A549 (cell line): ENCODE measurements at regions of chr17 and their contacts with region 1.

Region 1: DNA sequence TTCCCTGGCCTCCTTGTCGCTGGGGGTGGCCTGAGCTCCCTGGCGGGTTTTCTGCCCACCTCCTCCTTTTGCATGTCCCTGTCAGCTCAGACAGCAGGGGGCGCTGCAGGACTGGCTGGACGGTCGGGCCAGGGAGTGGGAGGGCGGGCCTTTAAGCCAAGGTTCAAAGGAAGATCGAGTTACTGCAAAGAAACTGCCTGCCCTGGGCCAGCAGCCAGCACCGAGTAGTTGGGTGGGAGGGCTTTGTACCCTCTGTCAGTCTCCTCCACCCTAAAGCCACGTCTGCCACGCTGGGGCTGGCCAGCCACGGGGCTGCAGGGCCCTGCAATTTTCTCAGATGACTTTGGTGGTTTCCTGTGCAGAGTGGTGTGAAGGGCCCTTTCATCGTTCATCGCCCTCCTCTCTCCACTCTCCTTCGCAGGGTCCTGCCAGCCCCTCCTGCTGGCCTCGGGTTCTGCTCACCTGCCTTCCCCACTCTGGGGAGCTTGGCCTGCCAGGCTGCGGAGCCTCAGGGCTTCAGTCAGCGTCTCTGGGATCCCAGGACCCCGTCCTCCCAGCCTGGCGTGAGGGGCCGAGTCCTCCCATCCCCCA is 12.3 kb downstream of the GPR142 start:
- DNase-seq: peak; percentile 85 to 94
- ATAC-seq: peak; percentile 84 to 96
- H3K4me3 ChIP-seq: 0 out of 3 replicates have a peak overlapping the region, but pooled peaks have one; percentile 4
- H3K27ac ChIP-seq: peak overlapping the region; percentile 36 to 80; a peak in 5 of 6 replicates
- H3K4me1 ChIP-seq: peaks cover 14% of the 10 kb centered on the region
- CTCF ChIP-seq: peak; percentile 99
- EP300 ChIP-seq: no peak
- POLR2A ChIP-seq: no peak
- RAD21 ChIP-seq: peak; percentile 100

Region 2: GRCh38 chr17:74296548-74296936 is 83.0 kb before region 1 on chr17:
- CTCF ChIA-PET with region 1: interaction called, 18 read pairs
- POLR2A ChIA-PET with region 1: no interaction called
- DNase-seq: peak; percentile 60 to 73
- ATAC-seq: peak; percentile 87
- H3K4me3 ChIP-seq: no peak overlapping the region
- H3K27ac ChIP-seq: no peak overlapping the region
- H3K4me1 ChIP-seq: peaks cover 7% of the 10 kb centered on the region; the same call in 2 of the 3 replicates
- CTCF ChIP-seq: peak; percentile 53
- EP300 ChIP-seq: no peak
- POLR2A ChIP-seq: no peak
- RAD21 ChIP-seq: peak; percentile 31 to 48; a peak in 3 of 5 replicates

Region 3: GRCh38 chr17:74394977-74395376 is 15.4 kb after region 1 on chr17:
- CTCF ChIA-PET with region 1: interaction called, 84 read pairs
- POLR2A ChIA-PET with region 1: no interaction called
- DNase-seq: peak in 1 of 2 experiments; percentile 27
- ATAC-seq: peak; percentile 41 to 49; a peak in 5 of 6 replicates
- H3K4me3 ChIP-seq: no peak overlapping the region
- H3K27ac ChIP-seq: peak overlapping the region in 1 of 2 experiments; percentile 42; a peak in 2 of 6 replicates
- H3K4me1 ChIP-seq: peaks cover 5% of the 10 kb centered on the region; the same call in 2 of the 3 replicates
- CTCF ChIP-seq: no peak
- EP300 ChIP-seq: no peak
- POLR2A ChIP-seq: no peak
- RAD21 ChIP-seq: no peak

Region 4: GRCh38 chr17:74424657-74425056 is 45.1 kb after region 1 on chr17:
- CTCF ChIA-PET with region 1: interaction called, 34 read pairs
- POLR2A ChIA-PET with region 1: interaction called, 14 read pairs
- DNase-seq: no peak
- ATAC-seq: no peak
- H3K4me3 ChIP-seq: no peak overlapping the region
- H3K27ac ChIP-seq: 0 out of 6 replicates have a peak overlapping the region, but pooled peaks of 1 of the 2 experiments have one; percentile 23
- H3K4me1 ChIP-seq: peaks cover 20% of the 10 kb centered on the region
- CTCF ChIP-seq: no peak
- EP300 ChIP-seq: no peak
- POLR2A ChIP-seq: no peak
- RAD21 ChIP-seq: no peak

Region 5: GRCh38 chr17:74467221-74467951 is 87.8 kb after region 1 on chr17:
- CTCF ChIA-PET with region 1: interaction called, 86 read pairs
- POLR2A ChIA-PET with region 1: no interaction called
- DNase-seq: no peak
- ATAC-seq: 0 out of 6 replicates have a peak, but pooled peaks have one; percentile 17 to 32
- H3K4me3 ChIP-seq: no peak overlapping the region
- H3K27ac ChIP-seq: no peak overlapping the region
- H3K4me1 ChIP-seq: no peaks in the 10 kb centered on the region
- CTCF ChIP-seq: no peak
- EP300 ChIP-seq: no peak
- POLR2A ChIP-seq: no peak
- RAD21 ChIP-seq: no peak

Region 6: DNA sequence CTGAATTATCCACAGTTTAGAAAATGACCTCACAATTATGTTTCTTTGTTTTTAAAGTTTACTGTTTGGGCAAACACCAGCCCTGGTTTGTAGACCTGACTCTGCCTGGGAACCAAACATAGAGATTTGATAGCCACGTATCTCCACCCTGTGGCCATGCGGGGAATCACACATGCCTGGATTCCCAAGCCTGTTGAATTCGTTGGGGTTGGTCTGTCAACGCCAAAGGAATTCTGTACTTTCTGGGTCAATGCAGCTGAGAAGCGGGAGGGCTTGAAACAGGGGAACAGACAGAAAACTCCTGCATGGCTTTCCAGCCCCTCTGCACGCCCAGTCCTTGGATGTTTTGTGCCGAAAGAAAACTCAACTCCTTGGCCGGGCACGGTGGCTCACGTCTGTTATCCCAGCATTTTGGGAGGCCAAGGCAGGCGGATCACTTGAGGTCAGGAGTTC is 113.8 kb after region 1 on chr17:
- CTCF ChIA-PET with region 1: interaction called, 138 read pairs
- POLR2A ChIA-PET with region 1: no interaction called
- DNase-seq: peak; percentile 75 to 86
- ATAC-seq: peak; percentile 97 to 98
- H3K4me3 ChIP-seq: no peak overlapping the region
- H3K27ac ChIP-seq: no peak overlapping the region
- H3K4me1 ChIP-seq: no peaks in the 10 kb centered on the region
- CTCF ChIP-seq: peak; percentile 90
- EP300 ChIP-seq: no peak
- POLR2A ChIP-seq: no peak
- RAD21 ChIP-seq: peak; percentile 92 to 97